ENCODE measurements at regions of chr1 and their contacts with region 1.

Region 1: GRCh38 chr1:109041621-109042468 is at the start of gene WDR47:
- DNase-seq: peak; percentile 96 to 98 (median 97)
- H3K4me3 ChIP-seq: peak within 1 kb of the TSS; percentile 65 to 92
- H3K4me3 Mint-ChIP-seq: peak within 1 kb of the TSS; percentile 91 to 95 (median 93)
- H3K27ac ChIP-seq: peak within 1 kb of the TSS; percentile 84
- H3K27ac Mint-ChIP-seq: peak within 1 kb of the TSS; percentile 79 to 96 (median 93)
- H3K4me1 ChIP-seq: peaks cover 14% of the 10 kb centered on the region
- H3K4me1 Mint-ChIP-seq: peaks cover 8 to 19% (median 14%) of the 10 kb centered on the region in 4 donors
- H3K27me3 ChIP-seq: no peaks in the 10 kb centered on the region
- H3K27me3 Mint-ChIP-seq: no peaks in the 10 kb centered on the region
- total RNA-seq, gene WDR47: 14.0 to 14.1 TPM

Region 2: DNA sequence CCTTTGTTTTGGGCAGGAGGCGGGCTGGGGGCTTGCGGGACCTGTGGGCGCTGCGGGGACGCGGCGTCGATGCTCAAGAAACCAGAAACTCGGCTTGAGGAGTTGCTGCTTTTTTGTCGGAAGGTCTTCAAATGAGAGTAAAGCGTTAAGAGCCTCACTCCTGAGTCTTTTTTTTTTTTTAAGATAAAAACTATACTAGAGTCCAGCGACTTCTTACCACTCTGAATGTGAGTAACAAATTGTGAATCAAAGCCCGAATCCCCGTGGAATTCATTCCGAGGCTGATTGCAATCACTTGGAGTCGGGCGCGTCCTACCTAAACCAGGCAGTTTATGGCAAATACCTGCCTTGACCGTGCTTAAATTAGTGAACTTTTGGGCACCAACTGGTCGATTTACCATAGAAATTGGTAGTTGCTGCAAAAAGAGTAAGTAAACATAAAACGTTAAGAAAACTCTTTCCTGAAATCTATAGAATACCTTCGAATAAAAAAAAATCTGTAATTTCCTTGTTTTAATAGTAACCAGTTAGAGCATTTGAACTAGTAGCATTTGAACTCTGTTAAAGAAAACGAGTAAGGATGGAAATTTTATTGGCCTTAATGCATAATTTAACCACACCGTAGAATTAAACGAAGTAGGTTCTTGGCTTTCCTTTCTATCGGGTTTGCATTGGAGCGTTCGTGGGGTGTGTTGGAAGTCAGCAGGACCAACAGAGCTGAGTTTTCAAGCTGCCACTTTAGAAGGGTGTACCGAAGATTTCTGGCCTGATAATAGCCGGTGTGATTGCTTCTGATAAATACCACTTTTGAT is 164.3 kb before region 1 on chr1:
- CTCF ChIA-PET with region 1: no interaction called
- POLR2A ChIA-PET with region 1: no interaction called
- intact Hi-C with region 1: loop called (anchors 5 kb)
- DNase-seq: no peak
- H3K4me3 ChIP-seq: peak overlapping the region; percentile 24 to 69
- H3K4me3 Mint-ChIP-seq: peak overlapping the region; percentile 92 to 97 (median 95)
- H3K27ac ChIP-seq: peak overlapping the region; percentile 42
- H3K27ac Mint-ChIP-seq: peak overlapping the region; percentile 66 to 96 (median 91)
- H3K4me1 ChIP-seq: peaks cover 16% of the 10 kb centered on the region
- H3K4me1 Mint-ChIP-seq: peaks cover 7 to 12% (median 8%) of the 10 kb centered on the region in 4 donors
- H3K27me3 ChIP-seq: no peaks in the 10 kb centered on the region
- H3K27me3 Mint-ChIP-seq: peaks cover 0 to 1% of the 10 kb centered on the region in 2 donors

Region 3: GRCh38 chr1:108955881-108956280 is 86.0 kb before region 1 on chr1:
- CTCF ChIA-PET with region 1: interaction called, 3 read pairs
- POLR2A ChIA-PET with region 1: interaction called, 11 read pairs
- intact Hi-C with region 1: loop called (anchors 1 kb)
- DNase-seq: no peak
- H3K4me3 ChIP-seq: no peak overlapping the region
- H3K4me3 Mint-ChIP-seq: peak overlapping the region in 3 of 8 donors; percentile 39 to 65 (median 62)
- H3K27ac ChIP-seq: no peak overlapping the region
- H3K27ac Mint-ChIP-seq: peak overlapping the region in 6 of 7 donors; percentile 70 to 98 (median 88)
- H3K4me1 ChIP-seq: peaks cover 32% of the 10 kb centered on the region
- H3K4me1 Mint-ChIP-seq: peaks cover 32 to 53% (median 42%) of the 10 kb centered on the region in 4 donors
- H3K27me3 ChIP-seq: no peaks in the 10 kb centered on the region
- H3K27me3 Mint-ChIP-seq: no peaks in the 10 kb centered on the region

Region 4: GRCh38 chr1:108963052-108963686 is 78.7 kb before region 1 on chr1 and contains the start of gene CLCC1:
- CTCF ChIA-PET with region 1: interaction called, 3 read pairs
- POLR2A ChIA-PET with region 1: interaction called, 23 read pairs
- intact Hi-C with region 1: loop called (anchors 2 kb)
- DNase-seq: peak; percentile 92 to 96 (median 94)
- H3K4me3 ChIP-seq: peak within 1 kb of the TSS; percentile 68 to 79
- H3K4me3 Mint-ChIP-seq: peak within 1 kb of the TSS; percentile 88 to 95 (median 90)
- H3K27ac ChIP-seq: peak within 1 kb of the TSS; percentile 81
- H3K27ac Mint-ChIP-seq: peak within 1 kb of the TSS; percentile 91 to 97 (median 96)
- H3K4me1 ChIP-seq: peaks cover 25% of the 10 kb centered on the region
- H3K4me1 Mint-ChIP-seq: peaks cover 18 to 52% (median 31%) of the 10 kb centered on the region in 4 donors
- H3K27me3 ChIP-seq: no peaks in the 10 kb centered on the region
- H3K27me3 Mint-ChIP-seq: no peaks in the 10 kb centered on the region
- total RNA-seq, gene CLCC1: 29.7 to 31.6 TPM

Region 5: DNA sequence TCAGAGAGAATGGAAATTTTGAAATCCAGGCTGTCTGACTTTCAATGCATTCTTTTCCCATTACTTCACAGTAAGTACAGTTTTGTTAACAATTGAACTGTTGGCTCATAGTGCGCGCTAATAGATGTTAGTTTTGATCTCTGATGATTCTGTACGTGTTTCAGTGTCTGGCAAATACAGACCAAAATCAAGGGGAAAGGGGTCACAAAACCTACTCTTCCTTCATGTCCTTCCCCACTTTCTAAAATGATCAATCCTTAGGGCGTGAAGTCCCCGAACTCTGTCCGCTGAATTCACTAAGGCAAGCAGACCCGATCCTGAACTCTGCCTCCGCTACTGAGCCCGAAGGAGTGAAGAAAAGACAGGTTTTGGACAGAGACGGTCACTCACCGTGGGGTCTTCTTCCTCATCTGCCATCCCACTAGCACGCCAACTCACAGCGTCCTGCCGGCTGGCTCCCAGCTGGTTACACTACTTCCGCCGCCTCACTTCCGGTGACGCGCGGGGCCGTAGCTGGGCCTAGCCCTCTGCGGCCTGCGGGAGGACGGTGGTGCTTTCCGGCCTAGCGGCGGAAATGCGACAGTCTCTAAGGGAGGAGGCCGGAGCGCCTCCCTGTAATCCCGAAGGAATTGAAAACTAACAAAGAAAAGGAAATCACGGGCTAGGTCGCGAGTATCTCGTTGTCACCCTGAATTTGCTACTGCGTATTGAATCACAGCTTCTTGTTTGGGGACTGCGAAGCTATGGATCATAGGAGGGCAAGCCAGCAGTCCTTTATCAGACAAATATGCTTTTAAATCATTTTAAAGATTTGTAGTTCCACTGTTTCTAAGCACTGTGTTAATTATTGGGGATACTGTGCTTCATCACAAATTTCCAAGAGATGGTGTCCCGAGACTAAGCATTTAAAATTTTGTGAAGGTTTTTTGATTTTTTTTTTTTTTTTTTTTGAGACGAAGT is 34.0 kb after region 1 on chr1 and contains the start of gene TAF13:
- CTCF ChIA-PET with region 1: interaction called, 3 read pairs
- POLR2A ChIA-PET with region 1: interaction called, 28 read pairs
- intact Hi-C with region 1: loop called (anchors 1 kb)
- DNase-seq: peak; percentile 82 to 88 (median 85)
- H3K4me3 ChIP-seq: peak within 1 kb of the TSS; percentile 95 to 99
- H3K4me3 Mint-ChIP-seq: peak within 1 kb of the TSS; percentile 95 to 100 (median 96)
- H3K27ac ChIP-seq: peak within 1 kb of the TSS; percentile 93
- H3K27ac Mint-ChIP-seq: peak within 1 kb of the TSS; percentile 99 to 100 (median 99)
- H3K4me1 ChIP-seq: peaks cover 17% of the 10 kb centered on the region
- H3K4me1 Mint-ChIP-seq: peaks cover 7 to 23% (median 17%) of the 10 kb centered on the region in 4 donors
- H3K27me3 ChIP-seq: no peaks in the 10 kb centered on the region
- H3K27me3 Mint-ChIP-seq: no peaks in the 10 kb centered on the region
- total RNA-seq, gene TAF13: 12.5 to 14.6 TPM

Region 6: DNA sequence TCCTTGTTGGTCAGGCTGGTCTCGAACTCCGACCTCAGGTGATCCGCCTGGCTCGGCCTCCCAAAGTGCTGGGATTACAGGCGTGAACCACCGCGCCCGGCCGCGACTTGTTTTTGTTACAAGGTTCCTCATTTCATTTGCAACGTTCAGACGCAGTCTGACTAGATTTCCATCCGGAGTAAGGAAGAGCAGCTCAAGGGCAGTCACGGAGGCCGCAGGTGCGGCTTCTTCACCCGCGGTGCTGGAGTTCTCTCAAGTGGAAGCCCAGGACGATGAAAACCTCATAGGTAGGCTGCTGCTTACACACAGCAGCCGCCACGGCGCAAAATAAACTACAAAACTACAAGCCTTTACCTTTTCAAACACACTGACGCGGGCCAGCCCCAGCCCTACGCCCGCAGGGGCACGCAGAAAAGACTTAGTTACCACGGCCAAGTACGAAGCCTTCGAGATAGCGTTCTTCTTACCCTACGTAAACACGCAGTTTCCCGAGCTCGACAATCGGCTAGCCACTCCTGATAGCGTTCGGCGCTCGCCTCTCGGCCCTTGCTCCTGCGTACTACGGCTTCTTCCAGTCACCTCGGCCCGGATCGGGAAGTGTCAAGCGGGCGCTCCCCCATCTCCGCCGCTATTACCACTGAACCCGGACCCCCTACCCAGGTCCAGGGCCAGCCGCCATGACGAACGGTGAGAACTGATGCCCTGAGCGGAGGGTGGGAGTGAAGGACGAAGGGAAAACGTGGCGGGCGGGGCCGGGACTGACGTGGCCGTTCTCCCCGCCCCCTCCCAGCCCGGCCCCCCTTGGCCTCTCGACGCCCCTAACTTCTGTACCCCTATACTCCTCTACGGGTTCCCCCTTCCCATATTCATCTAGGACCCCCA is 48.6 kb after region 1 on chr1 and contains the start of gene TMEM167B:
- CTCF ChIA-PET with region 1: no interaction called
- POLR2A ChIA-PET with region 1: interaction called, 23 read pairs
- intact Hi-C with region 1: loop called (anchors 1 kb)
- DNase-seq: peak; percentile 88 to 93 (median 89)
- H3K4me3 ChIP-seq: peak within 1 kb of the TSS; percentile 67 to 72
- H3K4me3 Mint-ChIP-seq: peak within 1 kb of the TSS; percentile 93 to 97 (median 94)
- H3K27ac ChIP-seq: peak within 1 kb of the TSS; percentile 90
- H3K27ac Mint-ChIP-seq: peak within 1 kb of the TSS; percentile 89 to 99 (median 98)
- H3K4me1 ChIP-seq: peaks cover 32% of the 10 kb centered on the region
- H3K4me1 Mint-ChIP-seq: peaks cover 18 to 48% (median 36%) of the 10 kb centered on the region in 4 donors
- H3K27me3 ChIP-seq: no peaks in the 10 kb centered on the region
- H3K27me3 Mint-ChIP-seq: no peaks in the 10 kb centered on the region
- total RNA-seq, gene TMEM167B: 42.9 to 47.9 TPM

Region 7: DNA sequence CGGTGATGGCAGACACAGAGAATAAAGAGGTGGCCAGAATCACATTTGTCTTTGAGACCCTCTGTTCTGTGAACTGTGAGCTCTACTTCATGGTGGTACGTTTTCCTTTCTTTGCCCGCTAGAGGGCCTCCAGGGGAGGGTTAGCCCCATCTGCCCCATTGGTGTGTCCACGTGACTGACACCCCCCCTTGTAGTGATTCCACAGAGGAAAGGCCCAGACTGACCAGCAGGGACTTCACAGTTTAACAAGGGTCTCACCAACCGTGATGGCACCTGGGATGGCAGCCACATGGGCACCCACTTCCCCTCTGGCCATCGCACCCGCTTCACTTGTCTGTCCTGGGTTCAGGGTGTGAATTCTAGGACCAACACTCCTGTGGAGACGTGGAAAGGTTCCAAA is 149.5 kb after region 1 on chr1:
- CTCF ChIA-PET with region 1: no interaction called
- POLR2A ChIA-PET with region 1: no interaction called
- intact Hi-C with region 1: no loop called
- DNase-seq: no peak
- H3K4me3 ChIP-seq: no peak overlapping the region
- H3K4me3 Mint-ChIP-seq: no peak overlapping the region
- H3K27ac ChIP-seq: no peak overlapping the region
- H3K27ac Mint-ChIP-seq: no peak overlapping the region
- H3K4me1 ChIP-seq: no peaks in the 10 kb centered on the region
- H3K4me1 Mint-ChIP-seq: peaks cover 0 to 3% (median 0%) of the 10 kb centered on the region in 4 donors
- H3K27me3 ChIP-seq: no peaks in the 10 kb centered on the region
- H3K27me3 Mint-ChIP-seq: no peaks in the 10 kb centered on the region